H1 (cell line): ENCODE measurements at regions of chr1 and their contacts with region 1.

Region 1: GRCh38 chr1:205631727-205632373 is at the start of gene ELK4:
- DNase-seq: peak; percentile 91 to 99
- H3K4me3 ChIP-seq: peak within 1 kb of the TSS; percentile 72 to 90 (median 78)
- H3K27ac ChIP-seq: peak within 1 kb of the TSS; percentile 93
- H3K4me1 ChIP-seq: no peaks in the 10 kb centered on the region; a peak in 2 of 7 replicates
- H3K27me3 ChIP-seq: no peaks in the 10 kb centered on the region
- CTCF ChIP-seq: peak; percentile 64 to 71 (median 65)
- EP300 ChIP-seq: peak in 1 of 2 experiments; percentile 14; a peak in 1 of 3 replicates
- POLR2A ChIP-seq: peak; percentile 83 to 95
- RAD21 ChIP-seq: peak; percentile 74 to 75
- total RNA-seq, gene ELK4: 23.3 and 26.3 TPM in 2 replicates

Region 2: GRCh38 chr1:205600085-205600484 is 31.8 kb before region 1 on chr1:
- CTCF ChIA-PET with region 1: interaction called, 6 read pairs
- POLR2A ChIA-PET with region 1: interaction called, 15 read pairs
- DNase-seq: no peak
- H3K4me3 ChIP-seq: no peak overlapping the region
- H3K27ac ChIP-seq: no peak overlapping the region
- H3K4me1 ChIP-seq: no peaks in the 10 kb centered on the region
- H3K27me3 ChIP-seq: no peaks in the 10 kb centered on the region
- CTCF ChIP-seq: no peak
- EP300 ChIP-seq: no peak
- POLR2A ChIP-seq: no peak
- RAD21 ChIP-seq: no peak

Region 3: DNA sequence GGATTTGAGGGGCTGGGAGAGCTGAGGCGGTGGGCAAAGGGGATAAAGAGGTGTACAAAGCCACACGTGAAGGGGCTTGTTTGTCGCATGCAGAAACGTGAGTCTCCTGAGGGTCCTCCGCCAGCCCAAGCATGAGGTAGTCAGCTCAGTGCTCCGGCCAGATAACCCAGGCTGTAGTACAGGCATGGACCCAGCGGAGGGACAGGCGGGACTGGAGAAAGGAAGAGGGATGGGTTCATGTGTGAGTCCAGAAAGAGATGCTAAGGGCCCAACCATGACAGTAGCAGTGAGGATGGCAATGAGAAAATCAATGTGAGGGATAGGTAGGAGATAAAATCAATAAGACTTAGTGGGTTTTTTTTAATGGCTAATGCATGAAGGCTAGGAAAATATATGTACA is 13.7 kb after region 1 on chr1:
- CTCF ChIA-PET with region 1: interaction called, 21 read pairs
- POLR2A ChIA-PET with region 1: interaction called, 20 read pairs
- DNase-seq: no peak
- H3K4me3 ChIP-seq: no peak overlapping the region
- H3K27ac ChIP-seq: no peak overlapping the region
- H3K4me1 ChIP-seq: peaks cover 2 to 8% (median 4%) of the 10 kb centered on the region in 4 experiments; a peak in 4 of 7 replicates
- H3K27me3 ChIP-seq: no peaks in the 10 kb centered on the region
- CTCF ChIP-seq: peak in 1 of 3 experiments; percentile 6; a peak in 1 of 4 replicates
- EP300 ChIP-seq: no peak
- POLR2A ChIP-seq: no peak
- RAD21 ChIP-seq: no peak